ENCODE measurements at regions of chr7 and their contacts with region 1.

Region 1: DNA sequence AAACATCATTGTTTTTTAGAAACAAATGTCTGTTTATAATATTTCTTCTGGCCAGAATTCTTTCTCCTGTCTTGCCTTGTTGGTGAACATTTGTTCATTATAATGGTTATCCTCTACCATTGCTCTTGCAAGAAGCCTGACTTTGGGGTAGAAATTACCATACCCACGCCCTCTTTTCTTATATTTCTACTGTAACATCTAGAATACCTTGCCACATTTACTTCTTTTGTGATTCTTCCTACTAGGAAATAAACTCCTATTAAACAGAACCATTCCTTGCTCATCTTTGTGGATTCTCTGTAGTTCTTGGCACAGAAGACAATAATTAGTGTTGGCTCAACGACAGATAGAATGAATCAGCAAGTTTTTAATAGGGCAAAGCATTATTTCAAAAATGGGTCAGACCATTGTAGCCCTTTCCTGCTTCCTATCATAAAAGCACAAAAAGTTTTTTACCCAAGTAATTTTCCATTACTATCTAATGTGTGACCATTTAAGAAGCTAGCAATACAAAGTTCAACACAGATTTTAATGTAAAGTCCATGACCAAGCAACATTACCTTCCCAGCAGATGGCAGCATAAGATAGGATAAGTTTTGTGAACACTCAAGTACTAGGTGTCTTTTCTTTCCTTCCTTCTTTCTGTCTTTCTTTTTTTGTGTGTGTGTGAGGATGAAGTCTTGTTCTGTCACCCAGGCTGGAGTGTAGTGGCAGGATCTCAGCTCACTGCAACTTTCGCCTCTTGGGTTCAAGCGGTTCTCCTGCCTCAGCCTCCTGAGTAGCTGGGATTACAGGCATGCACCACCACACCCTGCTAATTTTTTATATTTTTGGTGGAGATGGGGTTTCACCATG is 270.4 kb downstream of the HGF start:
- DNase-seq: no peak
- ATAC-seq: peak; percentile 85

Region 2: DNA sequence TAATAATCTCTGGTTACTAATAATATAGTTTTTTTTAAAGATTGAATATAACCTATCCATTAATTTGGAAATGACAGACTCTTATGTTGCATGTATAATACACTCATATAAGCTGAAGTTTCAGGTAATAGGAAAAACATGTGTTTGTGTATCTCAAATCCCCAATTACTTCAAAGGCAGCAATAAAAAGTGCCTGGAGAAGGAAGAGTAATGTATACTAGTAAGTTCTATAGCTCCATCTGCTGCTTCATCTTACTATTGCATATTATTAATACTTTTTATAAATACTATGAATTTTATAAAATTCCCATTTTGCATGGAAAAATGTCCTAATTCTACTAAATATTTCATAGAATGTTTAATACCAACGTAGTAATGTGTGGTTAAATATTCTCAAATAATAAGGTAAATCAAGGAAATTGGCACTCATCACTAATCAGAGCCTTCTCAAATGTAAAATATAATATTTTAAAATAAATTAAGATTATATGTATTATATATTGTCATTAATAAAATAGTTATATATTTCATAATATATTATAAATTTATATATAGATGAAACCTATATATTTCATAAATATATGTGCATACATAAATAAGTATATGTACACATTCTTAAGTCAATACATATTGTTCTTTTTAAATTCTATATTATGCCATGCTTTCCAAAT is 41.5 kb before region 1 on chr7:
- intact Hi-C with region 1: no loop called
- DNase-seq: no peak
- ATAC-seq: no peak

Region 3: DNA sequence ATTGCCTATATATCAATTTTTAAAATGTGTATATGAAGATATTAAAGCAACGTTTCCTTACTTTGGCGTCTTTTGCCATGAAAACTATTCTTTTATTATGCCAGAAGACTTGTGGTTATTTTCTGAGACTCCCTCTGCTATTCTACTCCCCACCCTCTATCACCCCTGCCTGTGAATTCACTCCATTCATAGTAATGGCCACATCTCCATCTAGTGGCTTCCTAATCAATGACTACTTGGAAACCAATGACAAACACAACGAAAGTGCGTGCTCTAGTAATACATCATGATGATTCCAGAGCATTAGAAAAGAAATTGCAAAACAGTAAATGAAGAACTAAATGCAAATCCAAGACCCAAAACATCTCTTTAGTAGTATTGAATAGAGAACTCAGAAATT is 457.0 kb after region 1 on chr7:
- intact Hi-C with region 1: loop called (anchors 5 kb)
- DNase-seq: no peak
- ATAC-seq: peak; percentile 89

Region 4: GRCh38 chr7:82017334-82017943 is 518.0 kb after region 1 on chr7:
- intact Hi-C with region 1: loop called (anchors 5 kb)
- DNase-seq: no peak
- ATAC-seq: no peak

Region 5: DNA sequence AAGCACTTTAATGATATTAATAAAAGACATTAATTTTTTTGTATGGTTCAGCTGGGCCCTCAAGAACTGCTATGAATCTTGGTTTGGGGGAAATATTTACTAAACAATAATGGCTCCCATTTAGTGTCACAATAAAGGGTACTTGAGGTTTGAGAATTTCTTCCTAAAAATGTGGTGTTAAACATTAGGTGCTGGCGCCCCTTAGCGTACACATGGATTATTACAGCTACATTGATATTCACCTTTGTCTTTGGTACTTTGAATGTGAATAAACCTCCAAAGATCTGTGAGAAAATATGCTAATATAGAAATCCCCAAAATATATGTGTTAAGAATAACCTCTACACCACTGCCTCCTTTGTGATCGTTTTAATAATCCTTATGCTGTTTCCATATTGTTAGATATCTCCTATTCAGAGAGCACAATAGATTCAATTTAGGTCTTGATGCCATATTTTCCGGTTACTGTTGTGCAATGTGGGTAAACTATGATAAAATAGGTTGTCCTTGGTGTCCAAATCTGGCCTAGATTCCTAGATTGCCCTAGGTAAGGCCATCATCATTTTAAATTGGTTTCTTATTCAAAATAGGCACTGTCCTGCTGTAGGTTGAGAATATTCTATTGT is 1105.9 kb after region 1 on chr7:
- intact Hi-C with region 1: loop called (anchors 10 kb)
- DNase-seq: no peak
- ATAC-seq: no peak

Region 6: DNA sequence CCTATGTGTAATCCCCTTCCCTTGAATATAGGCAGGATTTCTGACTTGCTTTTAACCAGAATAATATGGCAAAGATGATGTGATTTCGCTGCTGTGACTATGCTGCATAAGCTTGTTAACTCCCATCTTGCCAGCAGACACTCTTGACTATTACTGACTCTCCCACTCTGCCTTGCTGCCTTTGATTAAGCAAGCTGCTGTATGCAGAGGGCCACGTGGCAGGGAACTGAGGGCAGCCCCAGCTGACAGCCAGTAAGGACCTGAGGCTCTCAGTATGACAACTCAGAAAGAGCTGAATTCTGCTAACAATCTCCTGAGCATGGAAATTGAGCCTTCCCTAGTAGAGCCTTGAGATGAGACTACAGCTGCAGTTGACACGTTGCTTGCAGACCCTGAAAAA is 1223.5 kb after region 1 on chr7:
- intact Hi-C with region 1: loop called (anchors 5 kb)
- DNase-seq: no peak
- ATAC-seq: no peak